H1 (cell line): ENCODE measurements at regions of chr7 and their contacts with region 1.

Region 1: DNA sequence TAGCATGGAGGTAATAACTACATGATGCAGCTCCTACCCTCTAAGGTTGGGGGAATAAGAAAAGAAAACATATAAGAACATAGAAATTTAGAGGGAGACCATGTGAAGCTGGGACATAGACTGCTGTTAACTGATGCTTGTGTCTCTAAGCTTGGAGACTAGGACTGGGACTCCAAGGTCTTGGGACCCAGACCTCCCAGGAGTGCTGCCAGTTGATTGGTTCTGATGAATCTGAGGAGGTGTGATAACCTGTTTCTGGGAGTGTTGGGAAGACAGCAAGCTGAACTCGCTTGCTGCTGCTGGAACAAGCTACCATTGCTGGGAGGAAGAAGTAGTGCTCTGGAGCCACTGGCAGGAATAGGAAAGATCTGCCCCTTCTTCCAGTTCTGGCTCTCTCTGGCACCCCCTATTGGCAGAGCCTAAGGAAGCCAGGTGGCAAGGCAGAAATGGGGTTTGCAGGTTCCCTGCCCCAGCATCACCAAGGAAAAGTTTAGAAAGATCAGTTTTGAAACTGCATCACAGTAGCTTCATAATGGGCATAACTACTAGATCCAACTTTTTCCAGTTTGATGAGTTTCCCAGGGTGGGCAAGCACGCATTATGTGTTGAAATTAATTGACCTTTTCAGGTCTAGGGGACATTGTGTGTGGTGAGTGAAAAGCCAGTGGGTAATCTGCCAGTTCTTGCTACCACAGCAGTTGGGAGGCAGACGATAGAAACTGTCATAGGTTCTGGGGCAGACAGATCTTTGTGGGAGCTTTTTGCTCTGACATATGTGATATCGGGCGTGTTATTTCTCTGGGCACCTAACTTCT is 140.7 kb downstream of the SND1 start:
- DNase-seq: peak; percentile 39 to 89
- H3K4me3 ChIP-seq: no peak overlapping the region
- H3K27ac ChIP-seq: no peak overlapping the region
- H3K4me1 ChIP-seq: peaks cover 0 to 6% (median 3%) of the 10 kb centered on the region in 4 experiments; a peak in 5 of 7 replicates
- H3K27me3 ChIP-seq: no peaks in the 10 kb centered on the region
- CTCF ChIP-seq: peak; percentile 84 to 99 (median 87)
- EP300 ChIP-seq: no peak
- POLR2A ChIP-seq: no peak
- RAD21 ChIP-seq: peak; percentile 69 to 83

Region 2: GRCh38 chr7:127578036-127578684 is 214.6 kb before region 1 on chr7:
- CTCF ChIA-PET with region 1: no interaction called
- POLR2A ChIA-PET with region 1: no interaction called
- DNase-seq: no peak
- H3K4me3 ChIP-seq: no peak overlapping the region
- H3K27ac ChIP-seq: no peak overlapping the region
- H3K4me1 ChIP-seq: no peaks in the 10 kb centered on the region
- H3K27me3 ChIP-seq: no peaks in the 10 kb centered on the region
- CTCF ChIP-seq: peak; percentile 26 to 55 (median 54)
- EP300 ChIP-seq: no peak
- POLR2A ChIP-seq: no peak
- RAD21 ChIP-seq: peak; percentile 40 to 57

Region 3: GRCh38 chr7:127708788-127709187 is 83.9 kb before region 1 on chr7:
- CTCF ChIA-PET with region 1: interaction called, 91 read pairs
- POLR2A ChIA-PET with region 1: no interaction called
- DNase-seq: peak in 1 of 2 experiments; percentile 79
- H3K4me3 ChIP-seq: no peak overlapping the region
- H3K27ac ChIP-seq: no peak overlapping the region
- H3K4me1 ChIP-seq: no peaks in the 10 kb centered on the region
- H3K27me3 ChIP-seq: no peaks in the 10 kb centered on the region
- CTCF ChIP-seq: peak in 2 of 3 experiments; percentile 74 to 81; a peak in 3 of 4 replicates
- EP300 ChIP-seq: no peak
- POLR2A ChIP-seq: no peak
- RAD21 ChIP-seq: peak; percentile 91 to 94

Region 4: GRCh38 chr7:127726476-127726875 is 66.3 kb before region 1 on chr7:
- CTCF ChIA-PET with region 1: interaction called, 24 read pairs
- POLR2A ChIA-PET with region 1: no interaction called
- DNase-seq: no peak
- H3K4me3 ChIP-seq: no peak overlapping the region
- H3K27ac ChIP-seq: no peak overlapping the region
- H3K4me1 ChIP-seq: peaks cover 5 to 26% (median 14%) of the 10 kb centered on the region in 4 experiments
- H3K27me3 ChIP-seq: peaks cover 0 to 3% (median 1%) of the 10 kb centered on the region in 4 experiments; a peak in 1 of 7 replicates
- CTCF ChIP-seq: no peak
- EP300 ChIP-seq: no peak
- POLR2A ChIP-seq: no peak
- RAD21 ChIP-seq: no peak

Region 5: DNA sequence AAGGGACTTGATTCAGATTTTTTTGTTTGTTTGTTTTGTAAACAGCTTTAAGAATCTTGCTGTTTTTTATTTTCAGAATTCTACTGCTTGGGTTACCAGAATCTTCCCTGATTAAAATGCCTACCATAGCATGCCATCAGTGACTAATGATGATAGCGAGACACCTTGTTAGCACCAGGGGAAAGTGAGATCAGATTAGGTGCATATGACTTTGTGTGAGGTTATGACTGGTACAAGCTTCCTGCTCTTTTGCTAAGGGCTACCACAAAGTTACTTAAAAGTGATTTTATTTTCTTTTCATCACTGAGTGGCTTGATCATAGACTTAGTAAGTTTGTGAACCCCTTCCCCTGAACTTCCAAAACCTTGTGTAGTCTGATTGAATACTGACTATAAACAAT is 47.3 kb before region 1 on chr7:
- CTCF ChIA-PET with region 1: interaction called, 33 read pairs
- POLR2A ChIA-PET with region 1: no interaction called
- DNase-seq: no peak
- H3K4me3 ChIP-seq: no peak overlapping the region
- H3K27ac ChIP-seq: no peak overlapping the region
- H3K4me1 ChIP-seq: peaks cover 2 to 28% (median 24%) of the 10 kb centered on the region in 4 experiments; a peak in 6 of 7 replicates
- H3K27me3 ChIP-seq: no peaks in the 10 kb centered on the region
- CTCF ChIP-seq: no peak
- EP300 ChIP-seq: no peak
- POLR2A ChIP-seq: no peak
- RAD21 ChIP-seq: no peak

Region 6: DNA sequence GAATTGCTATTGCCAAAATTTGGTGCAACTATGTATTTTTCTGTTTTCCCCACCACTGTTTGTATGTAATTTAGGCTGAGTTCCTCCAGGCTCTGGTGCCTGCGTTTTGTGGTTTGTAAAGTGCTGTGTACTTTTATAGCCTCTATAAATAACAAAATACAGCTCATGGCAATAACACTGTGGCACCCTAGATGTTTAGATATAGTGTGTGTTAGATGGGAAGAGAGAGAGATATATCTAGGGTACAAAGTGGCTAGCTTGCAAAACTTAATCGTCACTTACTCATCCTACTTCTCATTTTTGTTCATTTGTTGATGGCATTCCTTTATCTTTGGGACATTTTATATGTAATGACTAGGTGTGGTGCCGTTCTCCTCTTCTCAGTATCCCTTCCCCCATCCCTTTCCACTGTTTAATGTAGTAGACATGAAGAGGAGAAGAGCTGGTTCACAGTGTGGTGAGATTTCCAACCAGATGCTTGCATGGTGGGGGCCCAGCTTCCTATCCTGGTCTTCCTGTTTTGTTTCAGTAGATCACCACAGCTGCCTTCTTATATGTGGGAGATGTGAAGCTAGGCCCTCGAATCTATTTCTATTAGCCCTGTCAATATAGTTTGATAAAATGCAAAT is 25.8 kb before region 1 on chr7:
- CTCF ChIA-PET with region 1: interaction called, 20 read pairs
- POLR2A ChIA-PET with region 1: no interaction called
- DNase-seq: no peak
- H3K4me3 ChIP-seq: no peak overlapping the region
- H3K27ac ChIP-seq: no peak overlapping the region
- H3K4me1 ChIP-seq: peaks cover 0 to 6% (median 1%) of the 10 kb centered on the region in 4 experiments; a peak in 2 of 7 replicates
- H3K27me3 ChIP-seq: no peaks in the 10 kb centered on the region
- CTCF ChIP-seq: no peak
- EP300 ChIP-seq: no peak
- POLR2A ChIP-seq: no peak
- RAD21 ChIP-seq: no peak

Region 7: DNA sequence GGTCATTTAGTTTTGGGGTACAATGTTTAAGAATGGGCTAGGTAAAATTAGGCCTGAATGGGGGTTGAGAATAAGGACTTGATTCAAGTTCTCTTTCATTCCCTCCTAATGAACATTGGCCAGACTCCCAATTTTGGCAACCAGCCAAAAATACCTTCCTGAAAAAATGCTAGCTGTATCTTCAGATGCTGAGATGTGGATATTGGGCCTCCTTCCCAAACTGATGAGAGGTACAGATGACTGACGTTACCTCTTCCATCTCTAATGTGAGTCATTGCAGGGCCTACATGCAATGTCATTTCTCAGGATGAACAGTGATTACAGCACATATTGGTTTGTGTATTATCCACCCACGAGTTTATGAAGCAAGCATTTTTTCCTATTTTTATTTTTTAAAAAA is 10.9 kb after region 1 on chr7:
- CTCF ChIA-PET with region 1: interaction called, 33 read pairs
- POLR2A ChIA-PET with region 1: no interaction called
- DNase-seq: no peak
- H3K4me3 ChIP-seq: no peak overlapping the region
- H3K27ac ChIP-seq: no peak overlapping the region
- H3K4me1 ChIP-seq: peaks cover 6 to 10% (median 8%) of the 10 kb centered on the region in 4 experiments; a peak in 5 of 7 replicates
- H3K27me3 ChIP-seq: no peaks in the 10 kb centered on the region
- CTCF ChIP-seq: no peak
- EP300 ChIP-seq: no peak
- POLR2A ChIP-seq: no peak
- RAD21 ChIP-seq: no peak